Common myeloid progenitor, CD34-positive (primary cell): ENCODE measurements at regions of chr3 and their contacts with region 1.

Region 1: GRCh38 chr3:146326670-146327543 is 76.0 kb upstream of the PLSCR4 start:
- DNase-seq: peak; percentile 47 to 67 (median 51)
- H3K4me3 ChIP-seq: peak overlapping the region in 1 of 7 experiments; percentile 45
- H3K27ac ChIP-seq: no peak overlapping the region
- H3K4me1 ChIP-seq: peaks cover 0 to 2% (median 0%) of the 10 kb centered on the region in 4 experiments
- H3K27me3 ChIP-seq: no peaks in the 10 kb centered on the region

Region 2: GRCh38 chr3:146065573-146066006 is 261.3 kb before region 1 on chr3:
- CTCF ChIA-PET with region 1: interaction called, 24 read pairs
- POLR2A ChIA-PET with region 1: no interaction called
- DNase-seq: peak; percentile 70 to 86 (median 77)
- H3K4me3 ChIP-seq: no peak overlapping the region
- H3K27ac ChIP-seq: no peak overlapping the region
- H3K4me1 ChIP-seq: no peaks in the 10 kb centered on the region
- H3K27me3 ChIP-seq: no peaks in the 10 kb centered on the region

Region 3: DNA sequence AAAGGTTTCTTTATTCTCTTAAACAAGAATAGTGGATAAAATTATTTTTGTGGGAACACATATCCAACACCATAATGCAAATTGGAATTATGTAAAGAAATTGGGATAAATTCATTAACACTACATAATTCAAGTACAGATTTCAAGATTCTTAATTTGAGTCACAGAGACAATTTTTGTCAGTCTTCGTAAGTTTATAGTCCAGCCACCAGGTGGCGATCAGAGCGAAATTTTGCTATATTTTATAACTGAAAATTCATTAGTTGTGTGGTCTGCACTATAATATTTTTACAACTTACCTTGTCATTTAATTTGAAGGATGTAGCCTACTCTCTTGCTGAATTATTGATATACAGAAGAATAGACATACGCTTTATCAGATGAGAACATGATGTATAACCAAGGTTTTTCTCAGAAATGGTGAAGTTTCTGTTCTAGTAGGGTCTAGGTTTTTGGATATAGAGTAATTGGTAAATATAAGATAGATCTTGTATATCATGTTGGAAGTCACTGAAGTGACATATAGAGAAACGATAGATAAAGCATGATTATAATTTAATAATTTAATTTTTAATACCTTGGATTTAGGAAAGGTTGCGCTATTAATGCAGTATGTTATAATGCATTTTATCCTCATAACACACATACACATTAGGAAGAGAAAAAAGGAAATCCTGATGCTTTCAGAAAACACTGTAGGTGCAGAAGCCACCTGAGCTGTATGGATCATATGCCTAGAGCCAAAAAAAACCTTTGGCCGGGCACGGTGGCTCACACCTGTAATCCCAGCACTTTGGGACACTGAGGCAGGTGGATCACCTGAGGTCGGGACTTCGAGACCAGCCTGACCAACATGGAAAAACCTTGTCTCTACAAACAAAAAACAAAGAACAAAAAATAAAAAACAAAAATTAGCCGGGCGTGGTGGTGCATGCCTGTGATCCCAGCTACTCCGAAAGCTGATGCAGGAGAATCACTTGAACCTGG is 107.7 kb before region 1 on chr3:
- CTCF ChIA-PET with region 1: interaction called, 15 read pairs
- POLR2A ChIA-PET with region 1: no interaction called
- DNase-seq: peak; percentile 41 to 71 (median 54)
- H3K4me3 ChIP-seq: no peak overlapping the region
- H3K27ac ChIP-seq: no peak overlapping the region
- H3K4me1 ChIP-seq: no peaks in the 10 kb centered on the region
- H3K27me3 ChIP-seq: no peaks in the 10 kb centered on the region

Region 4: GRCh38 chr3:146374146-146374545 is 47.2 kb after region 1 on chr3:
- CTCF ChIA-PET with region 1: no interaction called
- POLR2A ChIA-PET with region 1: no interaction called
- DNase-seq: no peak
- H3K4me3 ChIP-seq: no peak overlapping the region
- H3K27ac ChIP-seq: no peak overlapping the region
- H3K4me1 ChIP-seq: no peaks in the 10 kb centered on the region
- H3K27me3 ChIP-seq: no peaks in the 10 kb centered on the region

Region 5: GRCh38 chr3:146577662-146578061 is 250.8 kb after region 1 on chr3:
- CTCF ChIA-PET with region 1: interaction called, 11 read pairs
- POLR2A ChIA-PET with region 1: no interaction called
- DNase-seq: peak; percentile 54 to 83 (median 77)
- H3K4me3 ChIP-seq: no peak overlapping the region
- H3K27ac ChIP-seq: no peak overlapping the region
- H3K4me1 ChIP-seq: no peaks in the 10 kb centered on the region
- H3K27me3 ChIP-seq: no peaks in the 10 kb centered on the region